Aorta (tissue), 5 donors: ENCODE measurements at regions of chr2 and their contacts with region 1.

Region 1: DNA sequence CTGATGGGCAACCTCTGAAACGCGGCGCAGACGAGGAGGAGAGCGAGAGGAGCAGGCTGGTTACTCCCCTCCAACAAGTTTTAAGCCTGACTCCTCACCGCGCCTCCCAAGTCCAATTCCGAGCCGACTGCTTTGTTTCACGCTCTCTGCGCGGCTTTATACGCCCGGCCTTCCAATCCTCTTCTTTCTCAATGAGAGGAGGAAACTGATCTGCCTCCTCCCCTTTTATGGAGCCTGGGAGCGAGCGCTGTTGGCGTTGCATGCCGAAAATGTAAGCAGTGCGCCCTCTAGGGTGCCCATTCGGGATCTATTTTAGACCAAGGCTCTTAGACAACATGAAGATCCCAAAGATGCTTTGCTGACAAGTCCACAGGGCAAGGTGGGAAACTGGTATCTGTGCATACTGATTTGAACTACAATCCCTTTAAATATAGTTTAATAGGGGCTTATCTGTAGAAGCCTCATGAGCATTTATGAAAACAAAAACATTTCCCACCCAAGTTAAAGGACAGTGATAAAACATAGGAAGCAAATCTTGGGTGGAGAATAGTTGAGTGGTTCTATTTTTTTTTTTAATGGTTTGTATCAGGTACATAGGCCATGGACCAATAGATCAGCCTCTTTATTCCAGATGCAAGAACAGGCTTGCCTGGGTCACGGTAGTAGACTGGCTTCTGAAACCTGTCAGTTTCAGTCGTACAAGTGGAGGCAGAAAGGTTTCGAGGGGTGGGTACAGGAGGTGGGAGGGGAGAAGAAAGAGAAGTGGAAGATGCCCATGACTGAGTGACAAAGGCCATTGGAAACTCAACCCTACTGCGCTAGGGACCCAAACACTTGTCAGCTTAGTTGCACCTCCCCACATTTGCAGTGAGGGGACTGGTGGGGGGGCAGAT is at the start of gene RND3:
- DNase-seq: peak; percentile 97 to 98
- ATAC-seq: peak; percentile 90
- H3K4me3 ChIP-seq: peak within 1 kb of the TSS; percentile 45 to 79
- H3K27ac ChIP-seq: peak within 1 kb of the TSS; percentile 64 to 89
- H3K4me1 ChIP-seq: peaks cover 0 to 4% of the 10 kb centered on the region in 2 donors
- H3K27me3 ChIP-seq: no peaks in the 10 kb centered on the region
- total RNA-seq, gene RND3: 24.9 to 67.0 TPM

Region 2: GRCh38 chr2:149994057-149994753 is 493.6 kb before region 1 on chr2:
- intact Hi-C with region 1: loop called in 1 of 2 experiments (anchors 5 kb)
- DNase-seq: no peak
- ATAC-seq: no peak
- H3K4me3 ChIP-seq: no peak overlapping the region
- H3K27ac ChIP-seq: peak overlapping the region in 1 of 2 donors; percentile 88
- H3K4me1 ChIP-seq: peaks cover 9 to 18% of the 10 kb centered on the region in 2 donors
- H3K27me3 ChIP-seq: no peaks in the 10 kb centered on the region

Region 3: DNA sequence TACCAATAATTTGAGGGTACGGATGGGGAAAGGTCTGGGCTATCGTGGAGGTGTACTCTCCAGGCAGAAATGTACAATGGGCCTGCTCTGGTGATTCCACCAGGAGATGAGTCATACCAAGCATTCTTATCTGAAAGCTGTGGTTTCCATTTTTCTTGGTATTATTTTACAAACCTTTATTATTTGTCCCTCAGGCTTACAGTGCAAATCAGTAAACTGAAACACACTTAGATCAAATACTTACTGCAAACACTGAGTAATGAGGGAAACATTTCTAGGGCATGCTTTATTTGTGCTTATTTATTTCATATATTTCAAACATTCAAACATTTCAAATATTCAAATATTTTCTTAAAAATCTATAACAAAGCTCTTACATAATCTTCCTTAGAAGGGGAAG is 320.1 kb before region 1 on chr2:
- intact Hi-C with region 1: loop called (anchors 5 to 10 kb)
- DNase-seq: no peak
- ATAC-seq: no peak
- H3K4me3 ChIP-seq: no peak overlapping the region
- H3K27ac ChIP-seq: no peak overlapping the region
- H3K4me1 ChIP-seq: peaks cover 0 to 2% of the 10 kb centered on the region in 2 donors
- H3K27me3 ChIP-seq: no peaks in the 10 kb centered on the region

Region 4: DNA sequence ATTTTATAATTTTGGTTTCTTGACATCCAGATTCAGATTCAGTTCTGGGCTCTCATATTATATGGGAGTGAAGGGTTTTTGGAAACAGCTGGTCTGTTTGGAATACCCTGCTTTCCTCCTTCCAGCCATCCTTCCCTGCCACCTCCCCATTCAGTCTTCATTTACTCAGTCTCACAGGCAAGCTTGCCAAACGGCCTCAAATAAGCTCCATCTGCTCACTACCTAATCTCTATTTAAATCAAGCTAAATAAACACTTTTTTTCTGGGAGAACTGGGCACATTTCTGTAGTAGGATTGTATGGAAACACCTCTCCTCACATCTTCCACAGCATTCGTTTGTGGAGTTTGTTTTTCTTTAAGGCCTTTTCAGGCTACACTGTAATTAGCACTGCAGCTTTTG is 147.8 kb before region 1 on chr2:
- intact Hi-C with region 1: loop called in 1 of 2 experiments (anchors 10 kb)
- DNase-seq: no peak
- ATAC-seq: no peak
- H3K4me3 ChIP-seq: no peak overlapping the region
- H3K27ac ChIP-seq: no peak overlapping the region
- H3K4me1 ChIP-seq: peaks cover 2 to 3% of the 10 kb centered on the region in 2 donors
- H3K27me3 ChIP-seq: no peaks in the 10 kb centered on the region

Region 5: DNA sequence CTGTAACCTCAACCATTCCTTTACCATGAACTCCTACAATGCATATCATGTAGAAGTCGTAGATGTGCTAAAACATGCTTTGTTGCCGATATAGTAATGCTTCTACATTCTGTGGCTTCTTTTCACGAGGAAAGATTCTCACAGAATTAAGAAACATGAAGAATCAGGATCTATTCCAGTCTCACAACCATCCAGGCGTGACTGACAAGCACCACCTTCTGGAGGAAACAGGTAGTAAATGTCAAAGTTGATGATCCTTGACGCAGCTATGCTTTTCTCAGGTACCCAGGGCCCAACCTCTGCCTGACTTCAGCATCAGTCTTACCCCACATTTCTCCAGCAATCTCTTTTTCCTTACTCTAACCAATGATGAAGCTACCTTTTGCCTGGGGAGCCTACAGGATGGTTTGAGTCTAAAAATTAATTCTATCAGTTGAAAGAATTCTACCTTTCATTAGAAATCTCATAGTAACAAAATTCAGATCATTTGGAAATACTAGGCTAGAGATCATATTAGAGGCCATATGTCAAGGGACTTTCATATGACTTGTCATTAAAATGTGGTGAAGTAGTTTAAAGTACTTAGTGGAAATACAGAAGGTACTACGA is 123.0 kb after region 1 on chr2:
- intact Hi-C with region 1: loop called (anchors 10 kb)
- DNase-seq: no peak
- ATAC-seq: no peak
- H3K4me3 ChIP-seq: no peak overlapping the region
- H3K27ac ChIP-seq: no peak overlapping the region
- H3K4me1 ChIP-seq: no peaks in the 10 kb centered on the region
- H3K27me3 ChIP-seq: no peaks in the 10 kb centered on the region